Activated CD8-positive, alpha-beta T cell treated with anti-CD3 and anti-CD28 coated beads, Interleukin-2, amount 10 ng/mL, durations not matched to agents 7 days and 5 days (primary cell): ENCODE measurements at regions of chr5 and their contacts with region 1.

Region 1: DNA sequence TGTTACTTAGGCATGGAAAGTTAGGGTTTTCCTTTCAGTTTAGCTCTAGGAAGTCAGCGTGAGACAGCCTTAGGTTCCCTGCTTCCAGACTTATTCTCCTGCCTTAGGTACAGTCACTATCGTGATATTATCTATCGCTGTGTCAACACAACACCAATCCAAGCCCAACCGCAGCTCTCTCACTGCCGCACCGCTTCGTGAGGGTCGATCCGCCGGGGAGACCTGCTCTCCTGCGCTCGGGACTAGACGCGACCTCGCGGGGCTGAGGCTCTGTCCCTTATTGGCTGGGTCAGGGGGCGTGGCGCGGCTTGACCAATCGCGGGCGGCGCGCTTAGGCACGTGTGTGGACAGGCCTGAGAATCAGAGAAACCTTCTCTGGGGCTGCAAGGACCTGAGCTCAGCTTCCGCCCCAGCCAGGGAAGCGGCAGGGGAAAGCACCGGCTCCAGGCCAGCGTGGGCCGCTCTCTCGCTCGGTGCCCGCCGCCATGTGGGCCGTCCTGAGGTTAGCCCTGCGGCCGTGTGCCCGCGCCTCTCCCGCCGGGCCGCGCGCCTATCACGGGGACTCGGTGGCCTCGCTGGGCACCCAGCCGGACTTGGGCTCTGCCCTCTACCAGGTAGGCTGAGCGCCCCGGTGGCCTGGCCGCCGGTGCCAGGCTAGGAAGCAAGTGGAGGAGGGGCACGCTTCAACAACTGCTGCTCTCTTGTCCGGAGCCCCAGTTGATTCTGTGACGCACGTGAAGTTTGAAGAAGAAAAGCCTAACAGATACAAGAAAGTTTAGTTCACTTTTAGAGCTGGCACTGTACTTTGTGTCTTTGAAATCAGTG is at the start of gene MCCC2:
- DNase-seq: peak; percentile 98
- ATAC-seq: peak; percentile 100
- H3K4me3 Mint-ChIP-seq: peak within 1 kb of the TSS; percentile 94
- H3K27ac Mint-ChIP-seq: peak within 1 kb of the TSS; percentile 99
- H3K4me1 Mint-ChIP-seq: peaks cover 37% of the 10 kb centered on the region
- H3K27me3 Mint-ChIP-seq: no peaks in the 10 kb centered on the region
- total RNA-seq, gene MCCC2: 41.2 to 41.9 TPM

Region 2: GRCh38 chr5:71601222-71602041 is 14.3 kb after region 1 on chr5:
- CTCF ChIA-PET with region 1: interaction called, 100 read pairs
- POLR2A ChIA-PET with region 1: interaction called, 47 read pairs
- DNase-seq: peak; percentile 87
- ATAC-seq: peak; percentile 94
- H3K4me3 Mint-ChIP-seq: peak overlapping the region; percentile 16
- H3K27ac Mint-ChIP-seq: peak overlapping the region; percentile 93
- H3K4me1 Mint-ChIP-seq: peaks cover 41% of the 10 kb centered on the region
- H3K27me3 Mint-ChIP-seq: no peaks in the 10 kb centered on the region